ENCODE measurements at regions of chr20 and their contacts with region 1.

Region 1: GRCh38 chr20:31587545-31588389 is 17.3 kb upstream of the ID1 start:
- DNase-seq: no peak
- ATAC-seq: peak; percentile 61
- H3K4me3 Mint-ChIP-seq: peak overlapping the region; percentile 78
- H3K27ac Mint-ChIP-seq: no peak overlapping the region
- H3K4me1 Mint-ChIP-seq: peaks cover 8% of the 10 kb centered on the region
- H3K27me3 Mint-ChIP-seq: peaks cover 24% of the 10 kb centered on the region
- CTCF ChIP-seq: no peak

Region 2: DNA sequence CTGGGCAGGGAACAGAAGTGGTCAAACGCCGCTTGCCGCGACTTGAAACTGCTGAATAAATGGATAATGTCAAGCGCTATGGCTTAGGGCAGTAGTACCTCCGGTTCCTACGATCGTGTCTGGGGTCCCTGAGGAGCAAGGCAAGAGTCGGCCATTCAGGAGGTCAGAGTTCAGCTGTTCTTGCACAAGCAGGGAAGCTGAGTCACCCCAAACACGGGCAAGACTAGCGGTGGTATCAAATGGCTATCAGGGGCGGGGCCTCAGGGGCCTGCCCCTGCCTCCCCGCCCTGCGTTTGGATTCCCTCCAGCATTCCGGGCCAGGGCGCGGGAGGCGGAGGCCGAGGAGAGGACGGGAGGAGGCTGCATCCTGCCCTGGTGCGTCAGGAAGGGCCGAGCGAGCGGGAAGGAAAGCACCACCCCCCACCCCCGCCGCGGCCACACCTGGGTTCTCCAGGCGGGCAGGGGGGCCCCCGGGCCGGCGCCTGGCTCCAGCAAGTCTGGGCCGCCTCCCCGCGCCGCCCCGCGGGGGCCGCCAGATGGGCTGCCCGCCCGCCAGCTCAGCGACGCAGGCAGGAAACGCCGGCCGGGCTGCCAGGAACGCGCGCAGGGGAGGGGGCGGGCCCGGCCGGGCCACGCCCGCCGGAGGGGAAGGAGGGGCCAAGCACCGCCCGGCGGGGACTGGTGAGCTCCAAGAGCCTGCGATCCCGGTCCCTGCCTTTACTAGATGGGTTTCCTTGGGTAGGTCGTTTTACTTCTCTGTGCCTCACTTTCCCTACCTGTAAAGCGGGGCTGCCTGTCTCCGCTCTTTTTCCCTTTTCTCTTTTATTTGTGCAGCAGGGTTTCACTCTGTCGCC is 14.8 kb before region 1 on chr20:
- CTCF ChIA-PET with region 1: no interaction called
- POLR2A ChIA-PET with region 1: interaction called, 7 read pairs
- intact Hi-C with region 1: loop called (anchors 2 kb)
- DNase-seq: peak; percentile 75
- ATAC-seq: peak; percentile 91
- H3K4me3 Mint-ChIP-seq: peak overlapping the region; percentile 88
- H3K27ac Mint-ChIP-seq: peak overlapping the region; percentile 79
- H3K4me1 Mint-ChIP-seq: peaks cover 18% of the 10 kb centered on the region
- H3K27me3 Mint-ChIP-seq: no peaks in the 10 kb centered on the region
- CTCF ChIP-seq: no peak

Region 3: DNA sequence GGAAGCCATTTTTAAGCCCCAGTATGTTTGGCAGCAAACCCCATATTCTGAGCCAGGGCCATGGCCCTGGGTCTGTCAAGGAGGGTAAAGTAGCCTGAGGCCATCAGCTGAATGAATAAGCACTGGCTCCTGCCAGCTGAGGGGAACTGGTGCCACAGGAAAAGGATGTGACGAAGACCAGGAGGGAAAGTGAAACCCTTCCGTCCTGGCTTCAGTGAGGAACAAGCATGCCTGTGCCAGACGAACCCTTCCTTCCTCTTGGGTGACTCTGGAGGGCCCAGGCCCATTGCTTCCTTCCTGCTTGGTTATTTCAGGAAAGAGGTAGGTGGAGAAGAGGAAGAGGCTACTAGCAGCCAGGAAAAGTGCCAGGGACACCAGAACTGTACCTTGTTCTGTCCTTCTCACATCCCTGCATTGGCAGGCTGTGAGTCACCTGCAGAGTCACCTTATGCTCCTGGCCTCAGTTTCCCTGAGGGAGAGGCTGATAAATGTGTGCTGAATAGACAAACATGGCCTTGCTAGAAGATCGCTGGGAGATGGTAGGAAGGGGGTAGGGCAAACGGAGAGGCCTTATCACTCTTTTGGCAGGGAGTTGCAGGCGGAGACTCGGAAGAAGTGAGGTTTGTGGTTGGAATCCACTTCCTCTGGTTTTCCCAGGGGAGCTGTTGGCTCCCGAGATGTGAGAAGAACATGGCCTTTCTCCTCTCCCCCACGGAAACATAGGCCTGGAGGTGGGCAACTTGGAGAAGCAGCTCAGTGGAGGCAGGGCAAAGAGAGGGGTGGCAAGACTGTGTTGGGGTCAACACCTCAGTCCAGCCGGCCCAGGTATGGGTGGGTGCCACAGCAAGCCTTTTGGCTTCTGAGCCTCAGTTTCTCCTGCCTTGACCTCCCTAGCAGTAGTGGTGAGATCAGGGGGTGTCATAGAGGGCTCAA is 87.4 kb after region 1 on chr20:
- CTCF ChIA-PET with region 1: no interaction called
- POLR2A ChIA-PET with region 1: no interaction called
- intact Hi-C with region 1: no loop called
- DNase-seq: peak; percentile 26
- ATAC-seq: peak; percentile 82
- H3K4me3 Mint-ChIP-seq: peak overlapping the region; percentile 89
- H3K27ac Mint-ChIP-seq: peak overlapping the region; percentile 94
- H3K4me1 Mint-ChIP-seq: peaks cover 44% of the 10 kb centered on the region
- H3K27me3 Mint-ChIP-seq: no peaks in the 10 kb centered on the region
- CTCF ChIP-seq: no peak